ENCODE measurements at regions of chr10 and their contacts with region 1.

Region 1: DNA sequence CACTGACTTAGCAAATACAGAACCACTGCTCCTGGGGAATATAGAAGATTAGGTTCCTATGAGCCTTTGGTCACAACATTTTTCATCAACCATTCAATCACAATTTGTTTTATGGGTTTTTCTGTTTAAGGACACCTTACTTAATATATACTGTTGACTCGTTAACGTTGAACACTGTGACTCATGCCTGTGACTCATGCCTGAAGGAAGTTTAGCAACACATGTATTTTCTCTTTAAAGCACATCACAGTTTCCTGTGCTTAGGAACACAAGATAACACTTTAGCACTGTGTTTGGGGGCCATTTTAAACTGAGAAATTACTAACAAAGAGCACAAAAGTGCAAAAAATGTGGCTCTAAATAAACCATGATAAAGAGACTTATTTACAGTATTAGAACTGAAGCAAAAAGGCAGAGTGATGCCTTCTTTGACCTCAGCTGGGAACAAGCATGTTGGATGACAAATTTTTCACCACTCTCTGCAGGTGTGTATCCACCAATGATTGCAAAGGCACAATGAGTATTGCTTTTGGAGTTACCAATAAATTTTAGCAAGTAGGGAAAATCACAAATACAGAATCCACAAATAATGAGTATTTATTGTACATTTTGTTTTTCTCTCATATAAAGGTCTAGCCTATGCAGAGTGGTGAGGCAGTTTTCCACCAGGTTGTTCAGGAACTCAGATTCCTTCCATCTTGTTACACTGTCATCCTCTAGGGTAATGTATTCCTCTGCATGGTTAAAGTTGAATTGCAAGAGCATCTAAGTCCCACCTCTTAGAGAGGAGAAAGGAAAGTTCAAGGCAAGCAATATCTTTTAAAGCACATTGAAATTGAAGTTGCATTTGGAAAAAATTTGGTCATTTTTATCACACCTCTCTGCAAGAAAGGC is 7.3 kb downstream of the FGFBP3 start:
- DNase-seq: no peak
- H3K4me3 Mint-ChIP-seq: peak overlapping the region; percentile 45
- H3K27ac Mint-ChIP-seq: peak overlapping the region; percentile 90
- H3K4me1 Mint-ChIP-seq: peaks cover 28% of the 10 kb centered on the region
- H3K27me3 Mint-ChIP-seq: peaks cover 4% of the 10 kb centered on the region

Region 2: DNA sequence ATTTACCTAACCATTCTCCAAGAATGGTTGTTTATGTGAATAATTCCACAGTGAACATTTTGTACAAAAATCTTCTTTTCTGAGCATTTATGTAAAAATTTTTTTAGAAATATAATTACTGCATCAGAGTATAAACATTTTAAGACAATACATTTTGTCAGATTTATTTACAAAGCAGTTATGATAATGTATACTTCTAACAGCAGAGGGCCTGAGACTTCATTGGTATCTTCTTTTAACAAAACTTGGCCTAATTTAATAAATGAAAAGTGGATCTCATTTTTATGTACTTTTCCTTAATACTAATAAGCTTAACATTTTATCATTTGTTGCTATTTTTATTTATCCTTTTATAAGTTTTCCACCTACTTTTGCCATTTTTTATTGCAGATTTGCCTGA is 422.4 kb before region 1 on chr10:
- intact Hi-C with region 1: no loop called
- DNase-seq: no peak
- H3K4me3 Mint-ChIP-seq: no peak overlapping the region
- H3K27ac Mint-ChIP-seq: no peak overlapping the region
- H3K4me1 Mint-ChIP-seq: no peaks in the 10 kb centered on the region
- H3K27me3 Mint-ChIP-seq: no peaks in the 10 kb centered on the region

Region 3: DNA sequence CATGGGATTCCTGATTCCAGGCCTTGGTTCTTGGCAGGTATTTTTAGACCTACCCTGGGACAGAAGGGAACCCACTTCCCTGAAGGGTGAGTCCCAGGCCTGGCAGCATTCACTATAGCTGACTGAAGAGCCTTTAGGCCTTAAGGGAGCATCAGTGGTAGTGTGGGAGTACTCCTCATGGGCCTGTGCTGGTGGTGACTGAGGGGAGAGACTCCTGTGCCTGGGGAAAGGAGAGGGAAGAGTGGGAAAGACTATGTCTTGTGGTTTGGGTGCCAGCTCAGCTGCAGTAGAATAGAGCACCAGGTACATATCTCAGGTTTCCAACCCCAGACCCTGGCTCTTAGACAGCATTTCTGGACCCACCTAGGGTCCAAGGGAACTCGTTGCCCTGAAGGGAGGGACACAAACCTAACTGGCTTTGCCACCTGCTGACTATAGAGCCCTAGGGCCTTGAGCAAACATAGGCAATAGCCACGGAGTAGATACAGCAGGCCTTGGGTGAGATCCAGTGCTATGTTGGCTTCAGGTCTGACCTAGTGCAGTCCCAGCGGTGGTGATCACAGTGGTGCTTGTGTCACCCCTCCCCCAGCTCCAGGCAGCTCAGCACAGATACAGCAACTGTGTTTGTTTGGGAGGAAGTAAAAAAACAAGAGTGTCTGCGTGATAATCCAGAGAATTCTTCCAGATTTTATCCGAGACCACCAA is 113.7 kb before region 1 on chr10:
- intact Hi-C with region 1: no loop called
- DNase-seq: no peak
- H3K4me3 Mint-ChIP-seq: no peak overlapping the region
- H3K27ac Mint-ChIP-seq: no peak overlapping the region
- H3K4me1 Mint-ChIP-seq: no peaks in the 10 kb centered on the region
- H3K27me3 Mint-ChIP-seq: peaks cover 8% of the 10 kb centered on the region

Region 4: DNA sequence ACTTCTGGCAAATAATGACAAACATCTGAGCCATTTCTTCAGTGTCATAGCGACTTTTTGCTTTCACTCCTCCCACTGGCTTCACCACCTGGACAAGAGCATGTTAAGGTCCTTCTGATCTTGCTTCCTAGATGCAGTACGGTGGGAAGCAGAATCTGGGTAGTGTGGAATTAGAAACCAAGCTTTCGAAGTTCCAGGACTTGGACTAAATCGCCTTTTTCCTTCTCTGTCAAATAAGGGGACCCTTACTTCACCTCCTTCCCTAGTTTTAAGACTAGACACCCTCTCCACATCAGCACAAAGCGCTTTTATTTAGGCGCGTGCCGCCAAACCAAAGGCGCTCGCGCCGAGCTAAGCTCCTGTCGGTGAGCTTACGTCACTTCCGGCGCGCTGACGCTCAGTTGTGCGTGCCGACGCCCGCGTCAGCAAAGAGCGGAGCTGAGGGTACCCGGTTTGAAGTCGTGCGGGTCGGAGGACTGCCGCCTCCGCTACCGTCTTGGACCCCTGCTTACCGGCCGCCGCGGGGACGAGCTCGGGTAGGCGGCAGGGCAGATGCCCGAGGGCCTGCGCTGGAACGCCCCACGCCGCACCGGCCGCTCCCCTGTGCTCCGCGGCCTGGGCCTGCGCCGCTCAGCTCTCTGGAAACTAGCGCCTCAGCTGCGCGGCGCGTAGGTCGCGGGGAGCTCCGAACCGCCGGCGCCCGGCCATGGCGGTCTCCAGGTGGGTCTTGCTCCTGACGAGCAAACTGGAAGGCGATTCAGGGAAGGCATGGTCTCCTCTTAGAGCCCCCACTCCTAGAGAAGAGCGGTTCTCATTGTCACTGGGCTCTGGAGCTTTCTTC is 21.6 kb after region 1 on chr10 and contains the start of gene BTAF1:
- intact Hi-C with region 1: loop called (anchors 1 kb)
- DNase-seq: peak; percentile 89
- H3K4me3 Mint-ChIP-seq: peak within 1 kb of the TSS; percentile 98
- H3K27ac Mint-ChIP-seq: peak within 1 kb of the TSS; percentile 99
- H3K4me1 Mint-ChIP-seq: peaks cover 36% of the 10 kb centered on the region
- H3K27me3 Mint-ChIP-seq: peaks cover 9% of the 10 kb centered on the region
- total RNA-seq, gene BTAF1: 58.8 and 59.2 TPM in 2 replicates